ENCODE measurements at regions of chr19 and their contacts with region 1.

Region 1: DNA sequence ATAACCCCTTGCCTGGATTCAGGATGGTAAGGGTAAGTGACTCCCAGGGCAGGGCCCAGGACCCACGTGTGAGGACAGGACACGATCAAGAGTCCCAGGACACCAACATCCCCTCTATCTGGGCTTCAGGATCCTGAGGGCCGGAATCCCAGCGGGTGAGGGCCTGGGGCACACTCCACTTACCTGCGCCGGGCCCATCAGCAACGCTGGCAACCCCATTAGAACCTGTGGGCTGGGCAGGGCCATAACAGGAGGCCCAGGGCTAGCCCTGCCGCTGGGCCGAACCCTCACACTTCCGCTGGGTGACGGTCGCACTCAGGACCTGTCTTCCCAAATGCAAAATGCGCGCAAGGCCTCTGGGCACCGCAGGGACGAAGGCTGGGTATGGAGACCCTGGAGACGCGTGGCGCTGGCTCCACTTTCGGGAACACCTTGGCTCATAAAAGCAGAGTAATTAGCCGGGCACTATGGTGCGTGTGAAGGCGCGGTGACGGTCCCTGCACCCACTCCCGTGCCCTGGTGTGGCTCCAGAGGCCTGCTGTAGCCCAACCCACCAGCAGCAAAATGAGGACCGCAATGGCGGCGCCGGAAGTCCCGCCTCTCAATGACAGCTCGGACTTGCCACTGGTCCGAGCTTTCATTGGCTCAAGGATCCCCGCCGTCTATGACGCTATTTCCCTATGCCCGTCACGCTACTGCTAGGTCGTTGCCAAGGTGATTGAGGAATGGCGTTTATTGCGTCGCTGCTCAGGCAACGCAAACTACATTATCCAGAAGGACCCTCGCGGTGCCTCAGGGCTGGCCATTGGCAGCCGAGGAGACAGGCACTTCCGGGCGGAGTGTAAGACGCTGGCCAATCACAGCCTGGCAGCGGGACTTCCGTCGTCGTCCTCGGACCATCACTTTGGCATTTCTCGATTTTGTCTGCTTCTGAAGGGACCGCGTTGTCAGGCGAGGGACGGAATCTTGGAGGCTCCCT is at the start of gene ZNF132:
- DNase-seq: peak; percentile 88
- ATAC-seq: peak; percentile 97
- H3K4me3 Mint-ChIP-seq: peak within 1 kb of the TSS; percentile 96
- H3K27ac Mint-ChIP-seq: peak within 1 kb of the TSS; percentile 97
- H3K4me1 Mint-ChIP-seq: peaks cover 20% of the 10 kb centered on the region
- H3K27me3 Mint-ChIP-seq: peaks cover 4% of the 10 kb centered on the region
- CTCF ChIP-seq: no peak
- total RNA-seq, gene ZNF132: 9.2 and 10.4 TPM in 2 replicates

Region 2: DNA sequence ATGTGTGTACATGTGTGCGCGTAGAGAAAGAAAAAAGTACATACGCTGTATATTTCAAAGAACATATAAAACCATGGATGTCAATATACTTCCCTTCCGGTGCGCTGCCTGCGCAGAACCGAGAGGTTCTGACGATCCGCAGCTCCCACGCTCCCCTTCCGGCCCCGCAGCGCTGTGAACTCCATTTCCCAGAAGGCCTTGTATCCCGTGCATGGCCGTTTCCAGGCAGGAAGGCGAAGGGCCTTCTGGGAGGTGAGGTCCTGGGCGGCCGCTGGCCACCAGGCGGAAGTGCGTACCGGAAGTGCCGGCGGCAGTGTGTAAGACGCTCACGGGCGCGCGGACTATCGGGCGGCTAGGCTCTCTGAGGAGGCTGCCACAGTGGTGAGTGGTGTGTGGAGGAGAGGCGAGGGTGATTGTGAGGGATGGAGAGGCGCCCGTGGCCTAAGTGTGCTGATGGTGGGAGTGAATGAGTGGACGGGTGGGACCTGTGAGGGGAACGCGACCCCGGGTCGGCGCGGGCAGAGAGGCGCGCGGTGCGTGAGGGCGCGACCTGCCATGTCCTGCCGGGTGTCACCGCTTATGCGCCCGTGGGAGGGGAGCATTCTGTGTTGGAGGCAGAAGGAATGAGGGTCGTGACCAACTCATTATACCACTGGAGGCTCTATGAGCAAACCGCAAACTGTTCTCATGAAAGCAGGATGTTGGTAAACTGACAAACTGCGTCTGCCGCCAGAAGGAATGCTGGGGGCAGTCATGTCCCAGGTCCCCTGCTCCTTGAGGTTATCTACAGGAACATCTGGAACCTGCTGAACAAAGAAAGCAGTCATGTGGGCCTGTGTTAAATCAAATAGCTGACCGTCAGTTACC is 134.6 kb before region 1 on chr19 and contains the start of gene ERVK3-1:
- CTCF ChIA-PET with region 1: no interaction called
- POLR2A ChIA-PET with region 1: no interaction called
- intact Hi-C with region 1: loop called (anchors 1 kb)
- DNase-seq: peak; percentile 89
- ATAC-seq: peak; percentile 97
- H3K4me3 Mint-ChIP-seq: peak within 1 kb of the TSS; percentile 100
- H3K27ac Mint-ChIP-seq: peak within 1 kb of the TSS; percentile 98
- H3K4me1 Mint-ChIP-seq: peaks cover 38% of the 10 kb centered on the region
- H3K27me3 Mint-ChIP-seq: no peaks in the 10 kb centered on the region
- CTCF ChIP-seq: no peak
- total RNA-seq, gene ERVK3-1: 61.4 and 74.3 TPM in 2 replicates

Region 3: DNA sequence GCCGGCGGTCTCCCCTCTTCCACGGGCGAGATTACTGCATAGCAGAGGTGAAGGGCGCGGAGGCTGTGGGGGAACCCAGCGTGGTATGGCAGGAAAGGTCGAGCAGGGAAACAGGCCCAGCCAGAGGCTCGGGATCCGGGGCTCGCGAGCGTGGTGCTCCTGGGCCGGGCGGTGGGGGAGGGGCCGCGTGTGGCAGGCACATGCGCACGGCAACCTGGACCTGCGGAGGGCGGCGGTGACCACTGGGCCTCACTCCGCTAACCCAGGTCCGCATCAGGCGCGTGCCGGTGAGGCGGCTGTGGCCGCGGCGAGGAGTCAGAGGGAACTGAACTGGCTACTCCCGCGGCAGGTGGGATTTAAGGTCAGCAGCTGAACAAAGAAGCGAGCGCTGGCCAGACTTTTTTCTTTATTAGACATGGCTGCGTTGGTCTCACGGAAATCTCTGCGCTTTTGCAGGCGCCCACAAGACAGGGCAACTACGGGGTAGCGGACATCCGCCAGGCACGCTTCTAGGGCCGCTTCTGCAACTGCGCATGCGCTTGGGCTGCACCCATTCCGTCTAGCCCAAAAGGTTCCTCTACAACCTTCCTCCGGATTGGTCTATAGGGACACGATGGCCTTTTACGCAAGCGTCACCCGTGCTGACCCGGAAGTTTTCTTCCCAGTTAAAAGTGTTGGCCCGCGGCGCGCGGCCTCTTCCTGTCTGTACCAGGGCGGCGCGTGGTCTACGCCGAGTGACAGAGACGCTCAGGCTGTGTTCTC is 53.1 kb before region 1 on chr19 and contains the start of gene RPS5:
- CTCF ChIA-PET with region 1: no interaction called
- POLR2A ChIA-PET with region 1: interaction called, 6 read pairs
- intact Hi-C with region 1: loop called (anchors 1 kb)
- DNase-seq: peak; percentile 85
- ATAC-seq: peak; percentile 89
- H3K4me3 Mint-ChIP-seq: peak within 1 kb of the TSS; percentile 95
- H3K27ac Mint-ChIP-seq: peak within 1 kb of the TSS; percentile 98
- H3K4me1 Mint-ChIP-seq: peaks cover 50% of the 10 kb centered on the region
- H3K27me3 Mint-ChIP-seq: no peaks in the 10 kb centered on the region
- CTCF ChIP-seq: no peak
- total RNA-seq, gene RPS5: 1,982 and 2,193 TPM in 2 replicates

Region 4: GRCh38 chr19:58451358-58452101 is 11.7 kb after region 1 on chr19 and contains the start of gene ZNF324B:
- CTCF ChIA-PET with region 1: no interaction called
- POLR2A ChIA-PET with region 1: interaction called, 13 read pairs
- intact Hi-C with region 1: loop called (anchors 1 kb)
- DNase-seq: peak; percentile 94
- ATAC-seq: peak; percentile 98
- H3K4me3 Mint-ChIP-seq: peak within 1 kb of the TSS; percentile 86
- H3K27ac Mint-ChIP-seq: peak within 1 kb of the TSS; percentile 79
- H3K4me1 Mint-ChIP-seq: peaks cover 16% of the 10 kb centered on the region
- H3K27me3 Mint-ChIP-seq: peaks cover 15% of the 10 kb centered on the region
- CTCF ChIP-seq: no peak
- total RNA-seq, gene ZNF324B: 11.1 and 11.7 TPM in 2 replicates

Region 5: DNA sequence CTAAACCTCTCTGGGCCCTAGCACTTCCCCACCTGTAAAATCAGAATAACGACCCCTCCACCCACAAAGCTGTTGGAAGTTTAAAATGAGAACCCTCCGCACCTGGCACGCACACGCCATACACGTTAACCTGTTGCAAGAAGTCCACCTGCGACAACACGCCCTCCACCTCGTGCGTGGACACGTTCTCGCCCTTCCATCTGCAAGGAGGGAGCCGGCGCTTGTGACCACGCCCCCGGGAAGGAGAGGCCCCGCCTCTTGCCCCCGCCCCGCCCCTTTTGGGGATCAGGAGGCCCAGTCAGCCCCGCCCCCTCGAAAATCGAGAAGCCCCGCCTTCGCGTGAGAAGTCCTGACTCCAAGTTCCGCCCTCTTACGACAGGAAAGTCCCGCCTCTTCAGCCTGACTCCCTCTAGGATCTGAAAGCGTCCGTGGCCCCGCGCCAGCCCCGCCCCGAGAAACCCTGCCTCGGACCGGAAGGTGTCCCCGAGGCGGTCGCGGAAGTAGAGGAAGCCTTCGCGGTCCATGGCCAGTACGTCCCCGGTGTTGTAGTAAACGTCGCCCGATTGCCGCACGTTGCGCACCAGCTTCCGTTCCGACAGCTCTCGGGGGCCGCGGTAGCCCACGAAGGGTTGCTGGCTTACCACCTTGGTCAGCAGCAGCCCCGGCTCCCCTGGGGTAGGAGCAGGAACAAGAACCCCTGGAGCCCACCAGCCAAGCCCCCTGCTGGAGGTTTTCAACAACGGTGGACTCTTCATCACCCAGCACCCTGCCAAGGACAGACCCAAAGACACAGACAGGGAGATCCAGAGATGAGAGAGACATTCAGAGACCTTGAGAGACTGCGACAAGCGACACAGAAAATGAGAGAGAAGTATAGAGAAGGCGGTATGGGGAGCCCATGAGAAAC is 59.4 kb after region 1 on chr19:
- CTCF ChIA-PET with region 1: no interaction called
- POLR2A ChIA-PET with region 1: interaction called, 4 read pairs
- intact Hi-C with region 1: loop called (anchors 1 kb)
- DNase-seq: peak; percentile 89
- ATAC-seq: peak; percentile 92
- H3K4me3 Mint-ChIP-seq: peak overlapping the region; percentile 92
- H3K27ac Mint-ChIP-seq: peak overlapping the region; percentile 90
- H3K4me1 Mint-ChIP-seq: peaks cover 24% of the 10 kb centered on the region
- H3K27me3 Mint-ChIP-seq: no peaks in the 10 kb centered on the region
- CTCF ChIP-seq: no peak

Region 6: DNA sequence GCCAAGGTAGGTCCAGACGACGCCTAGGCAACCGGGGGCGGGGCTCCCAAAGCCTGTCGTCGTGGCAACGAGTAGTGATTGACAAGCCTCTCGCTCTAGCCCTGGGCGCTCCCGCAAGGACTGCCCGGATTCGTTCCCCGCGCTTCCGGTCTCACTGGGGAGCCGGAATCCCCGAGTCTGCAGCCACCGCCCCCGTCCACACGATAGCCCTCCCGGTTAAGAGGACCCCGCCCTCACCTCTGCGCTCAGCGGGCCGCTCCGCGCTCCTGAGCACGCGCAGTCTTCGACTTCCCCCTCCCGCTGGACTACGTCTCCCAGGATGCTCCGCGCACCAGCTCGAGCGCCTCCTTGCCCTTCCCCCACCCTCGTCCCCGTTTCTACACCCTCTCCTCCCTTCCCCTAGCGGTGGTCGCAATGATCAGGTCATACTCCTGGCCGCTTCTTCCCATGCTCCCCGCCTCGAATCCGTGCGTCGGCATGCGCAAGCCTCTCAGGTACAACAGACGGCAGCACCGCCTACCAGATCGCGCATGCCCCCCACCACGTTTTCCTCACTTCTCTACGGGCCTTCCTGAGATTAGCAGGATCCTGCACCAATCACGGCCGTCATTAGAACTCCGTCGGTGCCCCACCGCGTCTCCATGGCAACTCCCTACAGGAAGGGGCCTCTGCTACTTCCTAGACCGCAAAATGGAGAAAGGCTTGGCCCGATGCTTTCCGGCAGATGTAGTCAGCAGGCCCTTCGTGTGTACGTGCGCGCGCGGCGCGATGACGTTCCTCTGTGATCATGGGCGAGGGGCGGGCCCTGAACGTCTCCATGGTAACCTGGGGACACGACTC is 133.2 kb after region 1 on chr19 and contains the start of gene MZF1:
- CTCF ChIA-PET with region 1: no interaction called
- POLR2A ChIA-PET with region 1: no interaction called
- intact Hi-C with region 1: loop called (anchors 1 kb)
- DNase-seq: peak; percentile 100
- ATAC-seq: peak; percentile 61
- H3K4me3 Mint-ChIP-seq: peak within 1 kb of the TSS; percentile 97
- H3K27ac Mint-ChIP-seq: peak within 1 kb of the TSS; percentile 100
- H3K4me1 Mint-ChIP-seq: peaks cover 44% of the 10 kb centered on the region
- H3K27me3 Mint-ChIP-seq: no peaks in the 10 kb centered on the region
- CTCF ChIP-seq: no peak
- total RNA-seq, gene MZF1: 41.9 and 54.5 TPM in 2 replicates

Measured in activated B cell treated with CpG ODN at 0.5 μM for 24 hours (primary cell).